Thyroid gland (tissue), 4 donors: ENCODE measurements at regions of chr5 and their contacts with region 1.

Region 1: DNA sequence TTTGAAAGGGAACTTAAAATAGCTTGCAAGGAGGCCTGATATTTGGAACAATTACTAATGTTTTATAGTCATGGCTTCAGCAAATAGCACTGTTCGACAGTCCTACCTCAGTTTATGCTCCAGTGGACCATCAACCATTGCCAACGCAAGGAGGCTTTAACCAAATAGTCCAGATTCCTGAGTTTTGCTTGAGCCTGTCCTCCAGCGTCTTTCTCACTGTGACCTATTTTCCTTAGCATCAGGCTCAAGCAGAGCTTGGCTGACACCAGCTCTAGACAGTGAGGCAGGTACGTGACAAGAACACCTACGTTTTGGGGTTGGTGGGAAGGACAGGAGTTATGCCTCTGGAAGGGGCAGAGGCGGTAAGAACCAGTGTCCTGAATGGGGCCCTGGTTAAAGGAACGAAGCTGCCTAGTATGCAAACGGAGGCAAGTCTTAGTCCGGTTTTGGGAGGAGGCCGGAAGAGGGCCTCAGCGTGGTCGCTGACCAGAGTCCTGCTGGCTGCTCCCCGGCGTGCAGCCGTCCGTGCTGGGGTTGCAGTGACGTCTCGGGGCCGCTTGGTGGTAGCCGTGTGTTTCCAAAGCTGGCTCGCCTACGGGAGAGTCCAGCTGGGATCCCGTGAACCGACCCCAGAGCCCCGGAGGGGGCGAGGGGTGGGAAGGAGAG is 998 bp upstream of the FGF18 start:
- DNase-seq: peak; percentile 83 to 88
- H3K4me3 ChIP-seq: peak overlapping the region in 1 of 3 donors; percentile 10
- H3K27ac ChIP-seq: peak overlapping the region; percentile 1 to 63 (median 29)
- H3K4me1 ChIP-seq: peaks cover 27 to 47% of the 10 kb centered on the region in 2 donors
- H3K27me3 ChIP-seq: no peaks in the 10 kb centered on the region
- CTCF ChIP-seq: peak; percentile 79 to 97 (median 94)
- POLR2A ChIP-seq: peak in 1 of 2 donors; percentile 27

Region 2: DNA sequence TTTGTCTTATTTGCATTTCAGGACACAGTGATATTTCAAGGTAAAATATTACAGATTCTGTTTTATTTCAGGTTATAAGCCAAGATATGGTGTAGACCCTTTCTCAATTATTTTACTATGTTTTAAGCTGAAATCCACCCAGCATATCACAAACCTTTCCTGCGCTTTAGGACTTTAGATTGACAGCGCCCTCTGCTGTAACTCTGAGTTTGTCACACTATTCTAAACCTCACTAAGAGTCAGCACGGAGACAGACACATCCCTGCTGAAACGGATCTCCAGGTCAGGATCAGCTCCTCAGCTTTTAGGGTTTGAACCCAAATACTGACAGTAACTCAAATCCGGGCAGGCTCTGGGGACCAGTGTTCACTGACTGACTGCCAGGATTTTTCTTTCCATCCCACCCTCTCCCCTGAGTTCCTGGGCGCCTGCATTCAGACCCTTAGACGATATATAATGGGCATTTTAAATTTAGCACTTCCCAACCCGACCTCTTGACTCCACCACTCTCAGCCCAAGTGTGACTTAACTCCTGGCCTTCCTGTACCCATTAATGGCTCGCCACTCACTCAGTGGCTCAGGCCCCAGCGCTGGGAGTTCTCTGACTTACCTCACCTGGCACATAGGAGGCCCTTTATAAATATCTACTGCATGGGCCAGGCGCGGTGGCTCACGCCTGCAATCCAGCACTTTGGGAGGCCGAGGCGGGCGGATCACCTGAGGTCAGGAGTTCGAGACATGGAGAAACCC is 75.9 kb before region 1 on chr5:
- intact Hi-C with region 1: no loop called
- DNase-seq: peak; percentile 36 to 41
- H3K4me3 ChIP-seq: no peak overlapping the region
- H3K27ac ChIP-seq: no peak overlapping the region
- H3K4me1 ChIP-seq: no peaks in the 10 kb centered on the region
- H3K27me3 ChIP-seq: no peaks in the 10 kb centered on the region
- CTCF ChIP-seq: peak in 4 of 6 experiments; percentile 39 to 68 (median 54)
- POLR2A ChIP-seq: no peak

Region 3: GRCh38 chr5:171513591-171513990 is 95.1 kb after region 1 on chr5:
- intact Hi-C with region 1: no loop called
- DNase-seq: no peak
- H3K4me3 ChIP-seq: no peak overlapping the region
- H3K27ac ChIP-seq: no peak overlapping the region
- H3K4me1 ChIP-seq: no peaks in the 10 kb centered on the region
- H3K27me3 ChIP-seq: no peaks in the 10 kb centered on the region
- CTCF ChIP-seq: no peak
- POLR2A ChIP-seq: no peak

Region 4: GRCh38 chr5:171629221-171630026 is 211.0 kb after region 1 on chr5:
- intact Hi-C with region 1: loop called (anchors 10 kb)
- DNase-seq: no peak
- H3K4me3 ChIP-seq: no peak overlapping the region
- H3K27ac ChIP-seq: no peak overlapping the region
- H3K4me1 ChIP-seq: peaks cover 0 to 14% of the 10 kb centered on the region in 2 donors
- H3K27me3 ChIP-seq: no peaks in the 10 kb centered on the region
- CTCF ChIP-seq: no peak
- POLR2A ChIP-seq: no peak

Region 5: GRCh38 chr5:171907725-171908343 is 489.4 kb after region 1 on chr5:
- intact Hi-C with region 1: loop called (anchors 5 kb)
- DNase-seq: peak; percentile 24 to 48
- H3K4me3 ChIP-seq: no peak overlapping the region
- H3K27ac ChIP-seq: no peak overlapping the region
- H3K4me1 ChIP-seq: peaks cover 0 to 8% of the 10 kb centered on the region in 2 donors
- H3K27me3 ChIP-seq: no peaks in the 10 kb centered on the region
- CTCF ChIP-seq: peak; percentile 53 to 84 (median 72)
- POLR2A ChIP-seq: no peak

Region 6: DNA sequence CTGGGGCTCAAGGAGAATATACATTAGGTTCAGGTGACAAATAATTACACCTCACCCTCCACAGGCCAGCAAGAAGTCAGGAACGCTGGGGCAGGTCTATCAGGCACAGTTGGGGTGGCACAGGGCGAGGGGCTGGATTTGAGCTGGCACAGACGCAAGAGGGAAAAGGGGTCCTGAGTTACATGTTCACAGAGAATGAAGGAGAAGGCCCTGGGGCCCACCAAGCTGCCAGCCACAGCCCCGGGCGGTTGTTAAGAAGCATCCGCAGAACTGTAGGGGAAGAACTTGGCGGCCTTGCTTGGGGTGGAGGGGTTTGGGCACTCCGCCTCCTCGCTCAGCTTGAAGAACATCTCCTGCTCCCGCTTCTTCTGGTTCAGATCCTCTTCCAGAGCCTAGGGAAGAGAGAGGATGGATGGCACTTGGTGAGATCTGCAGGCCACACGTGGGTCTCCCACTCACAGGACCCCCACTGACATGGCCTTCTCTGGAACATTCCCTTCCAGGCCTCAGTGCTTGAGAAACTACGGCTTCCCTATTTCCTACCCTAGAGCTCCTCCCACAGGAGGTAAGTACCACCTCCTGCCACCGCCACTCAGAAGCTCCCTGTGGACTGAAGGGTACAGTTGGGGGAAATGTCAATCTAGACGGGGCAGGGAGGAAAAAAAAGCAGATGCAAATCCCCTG is 626.3 kb after region 1 on chr5:
- intact Hi-C with region 1: loop called (anchors 10 kb)
- DNase-seq: no peak
- H3K4me3 ChIP-seq: no peak overlapping the region
- H3K27ac ChIP-seq: no peak overlapping the region
- H3K4me1 ChIP-seq: no peaks in the 10 kb centered on the region
- H3K27me3 ChIP-seq: no peaks in the 10 kb centered on the region
- CTCF ChIP-seq: no peak
- POLR2A ChIP-seq: no peak